ENCODE measurements at regions of chr15 and their contacts with region 1.

Region 1: GRCh38 chr15:74291101-74292071 is 55.3 kb downstream of the CCDC33 start:
- DNase-seq: peak; percentile 91
- ATAC-seq: peak; percentile 92
- H3K4me3 Mint-ChIP-seq: peak overlapping the region; percentile 26
- H3K27ac Mint-ChIP-seq: peak overlapping the region; percentile 69
- H3K4me1 Mint-ChIP-seq: peaks cover 13% of the 10 kb centered on the region
- H3K27me3 Mint-ChIP-seq: peaks cover 24% of the 10 kb centered on the region

Region 2: GRCh38 chr15:74265046-74265639 is 26.2 kb before region 1 on chr15:
- CTCF ChIA-PET with region 1: no interaction called
- POLR2A ChIA-PET with region 1: no interaction called
- intact Hi-C with region 1: loop called in 1 of 2 experiments (anchors 1 kb)
- DNase-seq: peak; percentile 48
- ATAC-seq: no peak
- H3K4me3 Mint-ChIP-seq: no peak overlapping the region
- H3K27ac Mint-ChIP-seq: no peak overlapping the region
- H3K4me1 Mint-ChIP-seq: no peaks in the 10 kb centered on the region
- H3K27me3 Mint-ChIP-seq: peaks cover 23% of the 10 kb centered on the region